Caco-2 (cell line): ENCODE measurements at regions of chr6 and their contacts with region 1.

Region 1: GRCh38 chr6:144095331-144096002 is at the start of gene SF3B5:
- DNase-seq: peak; percentile 97 to 99
- H3K4me3 ChIP-seq: peak within 1 kb of the TSS; percentile 74
- H3K4me3 Mint-ChIP-seq: peak within 1 kb of the TSS; percentile 87
- H3K27ac Mint-ChIP-seq: peak within 1 kb of the TSS; percentile 94
- H3K4me1 ChIP-seq: peaks cover 4% of the 10 kb centered on the region; the same call in 1 of the 2 replicates
- H3K4me1 Mint-ChIP-seq: peaks cover 9% of the 10 kb centered on the region
- H3K27me3 ChIP-seq: no peaks in the 10 kb centered on the region
- H3K27me3 Mint-ChIP-seq: no peaks in the 10 kb centered on the region
- CTCF ChIP-seq: no peak
- total RNA-seq, gene SF3B5: 84.6 and 95.4 TPM in 2 replicates

Region 2: DNA sequence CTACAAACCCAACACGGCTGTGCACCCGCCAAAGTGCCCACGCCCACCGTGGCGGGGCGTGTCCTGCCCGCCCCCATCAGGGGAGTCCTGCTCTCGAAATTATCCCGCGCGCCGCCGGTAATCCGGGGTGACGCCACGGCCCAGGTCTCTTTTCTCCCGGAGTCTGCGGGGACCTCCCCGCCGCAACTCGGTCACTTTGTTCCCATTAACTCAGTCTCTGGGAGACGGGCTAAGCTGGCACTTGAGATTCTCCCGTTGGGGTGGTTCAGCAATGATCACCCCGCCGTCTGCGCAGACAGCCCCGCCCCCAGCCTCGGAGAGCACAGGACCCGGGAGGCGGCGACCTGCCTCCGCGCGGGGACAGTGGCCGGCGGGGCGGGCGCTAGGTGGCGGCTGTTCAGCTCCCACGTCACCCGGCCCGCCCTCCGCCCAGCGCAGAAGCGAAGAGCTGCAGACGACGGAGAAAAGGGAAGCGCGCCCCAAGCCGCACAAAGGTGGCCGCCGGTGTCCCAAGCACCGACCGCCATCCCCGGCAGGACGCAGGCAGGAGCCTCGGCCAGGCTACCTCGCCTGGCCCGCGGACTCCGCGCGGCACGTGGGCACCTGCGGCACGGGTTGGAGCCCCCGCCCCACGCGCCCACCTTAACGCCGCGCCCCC is 31.6 kb before region 1 on chr6:
- CTCF ChIA-PET with region 1: no interaction called
- POLR2A ChIA-PET with region 1: interaction called, 3 read pairs
- intact Hi-C with region 1: loop called (anchors 1 kb)
- DNase-seq: peak; percentile 83 to 89
- H3K4me3 ChIP-seq: peak overlapping the region; percentile 80
- H3K4me3 Mint-ChIP-seq: peak overlapping the region; percentile 90
- H3K27ac Mint-ChIP-seq: no peak overlapping the region
- H3K4me1 ChIP-seq: peaks cover 3% of the 10 kb centered on the region; the same call in 1 of the 2 replicates
- H3K4me1 Mint-ChIP-seq: no peaks in the 10 kb centered on the region
- H3K27me3 ChIP-seq: no peaks in the 10 kb centered on the region; the same call in 1 of the 2 replicates
- H3K27me3 Mint-ChIP-seq: peaks cover 31% of the 10 kb centered on the region
- CTCF ChIP-seq: peak in 1 of 2 experiments; percentile 21

Region 3: DNA sequence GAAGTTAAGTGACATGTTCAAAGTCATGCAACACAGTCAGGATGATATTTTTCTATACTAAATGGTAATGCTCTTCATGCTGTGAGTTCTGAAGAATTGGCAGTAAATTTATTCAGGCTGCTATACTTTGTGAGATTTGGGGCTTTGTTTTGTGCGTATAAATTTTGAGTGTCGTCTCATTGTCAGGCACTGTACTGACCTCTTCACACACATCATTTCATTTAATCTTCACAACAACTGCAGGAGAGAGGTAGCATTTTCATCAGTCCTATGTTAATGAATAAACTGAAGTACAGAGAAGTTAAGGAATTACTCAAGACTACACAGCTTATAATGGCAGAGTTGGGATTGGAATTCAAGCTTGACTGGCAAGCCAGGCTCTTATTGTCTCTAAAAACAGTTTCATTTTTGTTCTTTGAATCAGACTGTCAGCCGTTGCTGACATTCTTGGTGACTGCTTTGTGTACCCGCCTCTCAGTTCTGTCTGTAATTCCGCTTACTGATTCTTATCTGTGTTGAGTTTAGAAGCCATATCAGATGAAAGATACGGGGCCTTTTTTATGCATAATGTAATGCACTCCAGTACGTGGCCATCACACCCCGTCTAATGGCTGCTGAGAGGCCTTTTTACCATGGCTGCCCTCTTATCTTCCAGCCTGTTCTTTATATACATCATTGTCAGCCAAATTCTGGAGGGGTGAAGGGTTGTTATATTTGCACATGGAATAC is 464.6 kb after region 1 on chr6:
- CTCF ChIA-PET with region 1: no interaction called
- POLR2A ChIA-PET with region 1: no interaction called
- intact Hi-C with region 1: loop called (anchors 10 kb)
- DNase-seq: peak; percentile 56 to 64
- H3K4me3 ChIP-seq: no peak overlapping the region
- H3K4me3 Mint-ChIP-seq: peak overlapping the region; percentile 44
- H3K27ac Mint-ChIP-seq: peak overlapping the region; percentile 30
- H3K4me1 ChIP-seq: peaks cover 21% of the 10 kb centered on the region
- H3K4me1 Mint-ChIP-seq: peaks cover 6% of the 10 kb centered on the region
- H3K27me3 ChIP-seq: no peaks in the 10 kb centered on the region
- H3K27me3 Mint-ChIP-seq: no peaks in the 10 kb centered on the region
- CTCF ChIP-seq: no peak

Region 4: GRCh38 chr6:144659202-144660182 is 564.0 kb after region 1 on chr6:
- CTCF ChIA-PET with region 1: no interaction called
- POLR2A ChIA-PET with region 1: no interaction called
- intact Hi-C with region 1: loop called (anchors 1 kb)
- DNase-seq: peak; percentile 21 to 39
- H3K4me3 ChIP-seq: no peak overlapping the region
- H3K4me3 Mint-ChIP-seq: no peak overlapping the region
- H3K27ac Mint-ChIP-seq: peak overlapping the region; percentile 79
- H3K4me1 ChIP-seq: peaks cover 65% of the 10 kb centered on the region
- H3K4me1 Mint-ChIP-seq: peaks cover 41% of the 10 kb centered on the region
- H3K27me3 ChIP-seq: no peaks in the 10 kb centered on the region
- H3K27me3 Mint-ChIP-seq: no peaks in the 10 kb centered on the region
- CTCF ChIP-seq: no peak